BJ (cell line): ENCODE measurements at regions of chr6 and their contacts with region 1.

Region 1: DNA sequence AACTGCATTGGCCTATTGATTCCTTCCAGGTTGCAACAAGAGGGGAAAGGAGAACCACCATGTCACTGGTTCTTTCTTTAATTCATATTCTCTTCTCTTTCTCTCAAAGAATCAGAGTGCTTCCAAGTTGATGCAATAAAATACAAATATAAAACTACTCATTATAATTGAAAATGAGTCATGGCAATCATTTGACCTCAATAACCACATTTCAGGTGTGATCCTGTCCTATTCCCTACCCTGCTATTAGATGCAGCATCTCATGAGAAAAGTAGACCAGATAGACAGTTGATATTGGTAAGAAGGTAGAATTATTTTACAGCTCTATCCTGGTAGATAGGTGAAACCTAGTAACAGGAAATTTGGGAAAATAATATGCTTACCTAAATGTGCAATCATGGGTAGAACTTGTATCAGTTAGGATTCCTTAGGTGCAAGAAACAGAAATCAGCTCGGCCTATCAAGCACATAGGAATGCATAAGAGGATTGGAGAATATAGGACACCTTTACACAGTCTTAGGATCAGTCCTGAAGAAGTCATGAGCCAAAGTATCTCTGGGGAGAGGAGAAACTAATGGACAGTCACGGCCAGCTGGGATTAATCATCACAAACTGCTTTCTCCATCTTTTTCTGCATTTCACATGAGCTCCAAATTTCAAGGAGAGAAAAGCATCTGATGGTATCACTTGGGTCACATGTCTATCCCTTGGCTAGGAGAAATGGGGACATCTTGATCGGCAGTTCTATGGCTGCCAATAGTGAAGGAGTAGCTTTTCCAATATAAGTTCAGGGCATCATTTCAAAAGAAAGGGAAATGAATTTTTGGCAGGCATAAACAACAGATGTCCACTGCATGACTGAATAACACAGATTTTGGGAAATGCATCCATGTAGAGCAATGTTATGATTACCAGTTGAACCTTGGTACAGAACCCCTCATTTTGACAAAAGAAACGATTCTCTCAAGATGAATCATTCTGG is 19.3 kb upstream of the RNF146 start:
- DNase-seq: no peak
- H3K4me3 ChIP-seq: no peak overlapping the region
- H3K27me3 ChIP-seq: no peaks in the 10 kb centered on the region
- CTCF ChIP-seq: no peak

Region 2: GRCh38 chr6:127266178-127266891 is 18.9 kb after region 1 on chr6 and contains the start of gene RNF146:
- CTCF ChIA-PET with region 1: interaction called, 15 read pairs
- POLR2A ChIA-PET with region 1: no interaction called
- DNase-seq: peak; percentile 44
- H3K4me3 ChIP-seq: peak within 1 kb of the TSS; percentile 90
- H3K27me3 ChIP-seq: no peaks in the 10 kb centered on the region; the same call in 1 of the 2 replicates
- CTCF ChIP-seq: peak; percentile 78
- polyA plus RNA-seq, gene RNF146: 36.2 and 49.8 TPM in 2 replicates

Region 3: GRCh38 chr6:127279815-127280214 is 32.4 kb after region 1 on chr6:
- CTCF ChIA-PET with region 1: no interaction called
- POLR2A ChIA-PET with region 1: no interaction called
- DNase-seq: no peak
- H3K4me3 ChIP-seq: no peak overlapping the region
- H3K27me3 ChIP-seq: no peaks in the 10 kb centered on the region
- CTCF ChIP-seq: no peak